ENCODE measurements at regions of chr1 and their contacts with region 1.

Region 1: GRCh38 chr1:225881969-225882693 is at the start of gene TMEM63A:
- DNase-seq: peak; percentile 96
- total RNA-seq, gene TMEM63A: 21.4 TPM

Region 2: DNA sequence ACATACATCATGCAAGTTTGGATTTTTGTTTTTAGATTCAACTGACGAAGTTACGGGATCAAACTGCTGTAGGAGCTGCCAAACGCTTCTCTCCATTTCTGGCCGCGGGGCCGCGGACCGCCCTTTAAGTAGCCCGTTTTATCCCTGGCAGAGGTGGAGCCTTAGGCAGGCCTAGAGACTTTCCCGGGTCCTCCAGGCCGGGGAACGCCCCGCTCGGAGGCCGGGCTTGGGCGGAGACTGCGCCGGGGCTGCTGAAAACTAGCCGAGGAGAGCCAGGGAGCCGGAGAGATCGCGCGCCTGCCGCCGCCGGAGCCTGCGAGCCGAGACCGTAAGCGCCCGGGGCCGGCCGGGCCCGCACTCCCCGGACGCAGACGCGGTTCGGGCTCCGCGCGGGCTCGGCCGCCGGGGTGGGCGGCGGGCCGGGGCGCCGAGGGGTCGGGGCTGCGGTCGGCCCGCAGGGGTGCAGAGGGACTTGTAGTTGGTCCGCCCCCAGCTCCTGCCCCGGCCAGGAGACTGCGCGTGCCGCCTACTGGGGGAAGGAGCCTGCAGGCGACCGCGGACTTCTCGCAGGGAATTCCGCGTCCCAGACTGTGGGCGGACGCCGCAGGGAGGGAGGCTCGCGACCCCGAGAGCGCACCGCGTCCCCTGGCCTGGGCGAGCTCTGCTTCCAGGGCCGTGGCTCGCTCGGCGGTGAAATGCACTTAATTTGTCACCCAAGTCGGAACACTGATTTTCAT is 72.1 kb before region 1 on chr1 and contains the start of gene EPHX1:
- intact Hi-C with region 1: loop called (anchors 5 kb)
- DNase-seq: peak; percentile 95
- total RNA-seq, gene EPHX1: 39.2 TPM

Region 3: DNA sequence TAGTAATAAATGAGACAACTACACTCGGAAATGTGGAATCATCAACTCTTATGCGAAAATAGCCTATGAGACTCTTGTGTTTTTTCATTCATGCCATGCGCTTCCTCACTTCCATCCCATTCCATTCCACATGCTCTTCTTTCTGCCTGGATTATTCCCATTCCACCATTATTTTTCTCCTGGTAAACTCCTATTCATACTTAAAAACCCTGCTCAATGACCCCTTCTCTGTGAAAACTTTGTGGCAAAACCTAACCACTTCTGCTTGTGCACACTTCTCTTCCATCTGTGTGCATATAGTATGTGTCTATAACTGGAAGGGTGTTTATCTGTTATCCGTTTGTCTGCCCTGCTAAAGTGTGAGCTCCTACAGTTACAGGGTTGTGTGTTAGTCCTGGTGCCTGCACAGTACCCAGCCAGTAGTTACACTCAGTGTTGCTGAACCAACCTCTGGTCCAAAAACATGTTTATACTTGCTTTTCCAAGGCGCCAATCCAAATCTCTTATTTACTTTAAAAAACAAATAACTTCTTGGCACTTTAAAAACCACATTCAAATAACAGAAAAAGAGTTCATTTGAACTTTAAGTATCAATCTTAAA is 61.5 kb before region 1 on chr1:
- intact Hi-C with region 1: no loop called
- DNase-seq: no peak

Region 4: DNA sequence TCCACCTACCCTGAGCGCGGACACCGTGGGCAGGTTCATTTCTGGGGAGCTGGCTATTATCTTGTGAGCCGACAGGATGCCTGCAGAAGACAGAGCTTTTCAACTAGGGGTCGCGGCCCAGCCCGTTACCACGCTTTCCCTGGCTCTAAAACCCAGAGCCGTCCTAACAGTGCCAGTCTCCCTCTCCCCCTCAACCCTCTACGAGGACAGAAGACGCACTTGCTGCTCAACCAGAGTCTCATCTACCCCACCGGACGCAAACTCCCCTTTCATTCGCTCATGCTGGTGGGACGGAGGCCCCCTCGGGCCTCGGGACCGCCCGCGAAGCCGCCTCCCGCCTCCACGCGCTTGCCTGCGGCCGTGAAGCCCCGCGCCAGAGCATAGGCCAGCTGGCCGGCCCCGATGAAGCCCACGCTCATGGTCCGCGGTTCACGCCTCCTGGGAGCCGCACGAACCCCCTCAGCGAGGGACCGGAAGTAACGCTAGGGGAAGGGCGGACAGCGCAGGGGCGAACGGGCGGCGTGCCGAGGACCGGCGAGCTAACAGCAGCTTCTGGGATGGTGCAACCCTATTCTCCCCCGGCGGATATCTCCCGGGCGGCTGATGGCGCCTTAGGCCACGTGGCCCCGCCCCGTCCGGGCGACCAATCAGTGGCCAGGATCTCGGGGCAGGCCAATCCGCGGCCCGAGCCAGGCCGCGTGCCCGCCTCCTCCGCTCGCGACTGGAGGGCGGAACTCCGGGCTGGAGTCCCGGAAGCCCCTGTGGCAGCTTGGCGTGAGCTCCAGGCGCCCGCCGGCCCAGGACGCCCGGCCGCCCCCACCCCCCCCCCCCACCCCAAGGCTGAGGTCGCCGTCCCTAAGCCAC is 41.8 kb after region 1 on chr1 and contains the start of gene PYCR2:
- intact Hi-C with region 1: loop called (anchors 1 kb)
- DNase-seq: peak; percentile 97
- total RNA-seq, gene PYCR2: 68.6 TPM

Region 5: GRCh38 chr1:225937048-225937968 is 55.2 kb after region 1 on chr1:
- intact Hi-C with region 1: no loop called
- DNase-seq: no peak

Region 6: DNA sequence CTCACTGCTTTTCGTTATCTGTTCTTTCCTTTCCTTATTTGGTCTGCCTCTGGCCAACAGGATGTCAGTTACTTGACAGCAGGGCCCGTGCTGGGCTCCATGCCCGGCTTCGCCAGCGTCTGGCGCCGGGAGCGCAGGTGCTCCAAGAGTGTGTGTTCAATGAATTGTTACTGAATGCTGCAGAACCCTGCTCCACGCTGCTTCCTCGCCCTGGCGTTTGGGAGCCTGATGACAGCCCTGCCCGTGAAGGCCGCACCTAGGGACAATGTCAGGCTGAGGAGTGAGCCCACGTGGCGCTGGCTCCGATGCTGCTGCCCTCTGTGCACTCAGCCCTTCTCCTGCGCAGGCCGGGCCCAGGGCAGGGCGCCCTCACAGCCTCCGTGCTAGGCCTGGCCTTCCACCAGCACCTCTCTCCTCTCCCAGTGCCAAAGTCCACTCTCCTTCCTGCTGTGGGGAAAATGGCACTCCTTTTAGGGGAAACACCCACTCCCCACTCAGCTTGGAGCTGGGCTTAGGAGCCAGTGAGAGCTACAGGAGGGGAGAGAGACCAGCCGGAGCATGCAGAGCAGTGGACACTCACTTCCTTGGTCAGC is 253.0 kb after region 1 on chr1:
- intact Hi-C with region 1: no loop called
- DNase-seq: peak; percentile 75

Measured in cardiac septum (tissue), 1 donor.